CD14-positive monocyte (primary cell): ENCODE measurements at regions of chr7 and their contacts with region 1.

Region 1: GRCh38 chr7:73828107-73828803 is 2.5 kb upstream of the CLDN4 start:
- DNase-seq: peak in 1 of 3 donors; percentile 58
- H3K4me3 ChIP-seq: no peak overlapping the region
- H3K4me3 Mint-ChIP-seq: peak overlapping the region in 1 of 2 donors; percentile 72
- H3K27ac ChIP-seq: no peak overlapping the region
- H3K27ac Mint-ChIP-seq: peak overlapping the region in 1 of 7 donors; percentile 60
- H3K4me1 ChIP-seq: peaks cover 38 to 49% of the 10 kb centered on the region in 2 donors
- H3K4me1 Mint-ChIP-seq: peaks cover 42% of the 10 kb centered on the region
- H3K27me3 ChIP-seq: peaks cover 0 to 17% of the 10 kb centered on the region in 2 donors
- H3K27me3 Mint-ChIP-seq: peaks cover 29 to 52% (median 32%) of the 10 kb centered on the region in 3 donors
- CTCF ChIP-seq: no peak

Region 2: DNA sequence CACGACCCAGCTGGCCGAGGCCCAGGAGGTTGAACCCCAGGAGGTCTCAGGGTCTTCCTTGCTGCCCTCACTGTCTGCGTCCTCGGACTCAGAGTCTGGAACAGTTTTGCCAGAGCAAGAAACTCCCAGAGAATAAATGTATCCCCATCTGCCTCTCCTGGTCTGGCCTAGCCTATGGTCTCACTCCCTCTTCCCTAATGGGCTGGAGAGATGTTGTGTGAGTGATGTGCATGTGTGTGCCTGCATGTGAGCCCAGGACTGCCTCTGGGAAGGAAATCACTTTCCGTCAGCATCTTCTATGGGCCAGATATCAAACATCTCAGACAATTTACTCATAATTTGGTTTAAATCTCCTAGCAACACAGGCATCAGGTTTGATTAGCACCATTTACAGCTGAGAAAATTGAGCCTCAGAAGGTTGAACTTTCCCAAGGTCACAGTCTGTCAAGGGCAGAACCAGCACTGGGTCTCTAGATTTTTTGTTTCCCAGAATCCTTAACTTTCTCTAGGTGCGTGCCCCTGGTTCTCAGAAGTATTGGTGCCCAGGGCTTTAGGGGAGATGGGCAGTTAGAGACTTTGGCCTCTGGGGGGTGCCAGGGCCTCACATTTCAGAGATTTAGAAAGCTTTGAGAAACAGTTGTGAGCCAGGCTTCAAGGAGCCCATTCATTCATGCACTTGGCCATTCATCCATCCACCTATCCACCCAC is 37.6 kb after region 1 on chr7:
- intact Hi-C with region 1: loop called in 1 of 2 experiments (anchors 5 kb)
- DNase-seq: peak in 2 of 3 donors; percentile 29 to 31
- H3K4me3 ChIP-seq: no peak overlapping the region
- H3K4me3 Mint-ChIP-seq: no peak overlapping the region
- H3K27ac ChIP-seq: no peak overlapping the region
- H3K27ac Mint-ChIP-seq: no peak overlapping the region
- H3K4me1 ChIP-seq: no peaks in the 10 kb centered on the region
- H3K4me1 Mint-ChIP-seq: no peaks in the 10 kb centered on the region
- H3K27me3 ChIP-seq: no peaks in the 10 kb centered on the region
- H3K27me3 Mint-ChIP-seq: peaks cover 2 to 8% (median 6%) of the 10 kb centered on the region in 3 donors
- CTCF ChIP-seq: peak; percentile 69

Region 3: DNA sequence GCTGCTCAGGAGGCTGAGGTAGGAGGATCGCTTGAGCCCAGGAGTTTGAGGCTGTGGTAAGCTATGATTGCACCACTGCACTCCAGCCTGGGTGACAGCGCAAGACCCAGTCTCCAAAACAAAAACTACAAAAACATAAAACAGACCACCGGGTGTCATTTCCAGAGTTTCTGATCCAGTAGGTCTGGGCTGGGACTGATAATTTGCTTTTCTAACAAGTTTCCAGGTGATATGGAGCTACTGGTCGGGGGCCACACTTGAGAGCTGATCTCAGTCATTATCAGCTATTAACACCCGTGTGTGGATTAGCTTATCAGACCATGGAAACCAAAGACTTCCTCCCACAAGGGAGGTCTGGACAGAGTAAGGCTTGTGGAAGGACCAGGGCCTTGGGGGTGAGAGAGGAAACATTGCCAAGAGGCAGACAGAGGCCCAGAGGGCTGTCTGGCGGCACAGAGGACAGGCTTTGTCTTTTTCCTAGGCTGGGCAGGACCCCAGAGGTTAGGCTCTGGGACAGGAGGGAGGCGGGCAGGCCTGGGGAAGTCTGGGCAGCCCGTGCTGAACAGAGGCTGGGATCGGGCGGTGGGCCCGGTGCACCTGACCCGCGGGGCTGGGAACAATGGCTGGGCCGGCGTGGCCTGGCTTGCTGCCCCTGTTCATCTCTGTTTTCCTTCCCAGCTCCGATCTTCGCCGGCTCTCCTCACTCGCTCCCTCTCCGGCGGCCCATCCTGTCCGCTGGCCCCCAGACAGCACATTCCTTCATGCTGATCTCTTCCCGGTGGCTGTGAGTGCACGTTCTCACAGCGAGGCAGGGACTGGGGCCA is 57.9 kb after region 1 on chr7:
- intact Hi-C with region 1: no loop called
- DNase-seq: no peak
- H3K4me3 ChIP-seq: no peak overlapping the region
- H3K4me3 Mint-ChIP-seq: peak overlapping the region in 1 of 2 donors; percentile 62
- H3K27ac ChIP-seq: no peak overlapping the region
- H3K27ac Mint-ChIP-seq: peak overlapping the region in 1 of 7 donors; percentile 30
- H3K4me1 ChIP-seq: no peaks in the 10 kb centered on the region
- H3K4me1 Mint-ChIP-seq: peaks cover 12% of the 10 kb centered on the region
- H3K27me3 ChIP-seq: peaks cover 7 to 23% of the 10 kb centered on the region in 2 donors
- H3K27me3 Mint-ChIP-seq: peaks cover 30 to 46% (median 40%) of the 10 kb centered on the region in 3 donors
- CTCF ChIP-seq: no peak